GM12878 (cell line): ENCODE measurements at regions of chr11 and their contacts with region 1.

Region 1: DNA sequence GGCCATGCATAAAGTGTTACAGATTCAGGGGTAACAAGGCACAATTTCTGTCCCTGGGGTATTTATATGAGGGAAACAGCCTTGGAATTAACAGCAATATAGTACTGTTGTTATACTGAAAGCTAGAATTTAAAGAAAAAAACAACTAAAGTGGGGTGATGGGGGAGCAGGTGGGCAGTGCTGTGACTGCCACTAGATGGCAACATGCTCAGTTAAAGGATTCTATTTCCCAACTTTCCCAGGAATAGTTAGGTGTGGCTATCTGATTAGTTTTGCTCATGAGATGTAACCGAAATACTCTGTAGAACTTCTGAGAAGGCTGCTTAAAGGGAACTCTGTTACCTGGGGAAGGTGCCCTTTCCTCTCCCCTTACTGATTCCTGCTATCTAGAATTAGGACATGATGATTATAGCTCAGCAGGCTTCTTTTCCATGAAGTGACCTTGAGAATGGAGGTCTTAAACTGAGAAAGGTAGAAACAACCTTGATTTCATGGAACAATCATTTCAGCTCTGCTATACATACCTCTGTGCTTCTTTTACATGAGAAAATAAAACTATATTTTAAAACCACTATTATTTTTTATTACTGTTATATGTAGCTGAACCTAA is 102.6 kb downstream of the RELT start:
- DNase-seq: no peak
- ATAC-seq: peak; percentile 68
- H3K4me3 ChIP-seq: no peak overlapping the region
- H3K27ac ChIP-seq: no peak overlapping the region
- H3K4me1 ChIP-seq: no peaks in the 10 kb centered on the region
- H3K27me3 ChIP-seq: no peaks in the 10 kb centered on the region
- CTCF ChIP-seq: peak; percentile 52 to 76 (median 67)
- EP300 ChIP-seq: no peak
- POLR2A ChIP-seq: no peak
- RAD21 ChIP-seq: 0 out of 2 replicates have a peak, but pooled peaks have one; percentile 18

Region 2: GRCh38 chr11:73288873-73289707 is 189.8 kb before region 1 on chr11:
- CTCF ChIA-PET with region 1: no interaction called
- POLR2A ChIA-PET with region 1: no interaction called
- RAD21 ChIA-PET with region 1: no interaction called
- SMC1A ChIA-PET with region 1: no interaction called
- in situ Hi-C with region 1: no loop called
- intact Hi-C with region 1: no loop called
- DNase-seq: peak; percentile 70
- ATAC-seq: peak; percentile 95
- H3K4me3 ChIP-seq: 0 out of 2 replicates have a peak overlapping the region, but pooled peaks have one; percentile 9
- H3K27ac ChIP-seq: peak overlapping the region; percentile 49
- H3K4me1 ChIP-seq: peaks cover 23% of the 10 kb centered on the region
- H3K27me3 ChIP-seq: no peaks in the 10 kb centered on the region; a peak in 2 of 4 replicates
- CTCF ChIP-seq: peak; percentile 92 to 99 (median 97)
- EP300 ChIP-seq: 0 out of 4 replicates have a peak, but pooled peaks of 1 of the 2 experiments have one; percentile 6
- POLR2A ChIP-seq: no peak
- RAD21 ChIP-seq: peak; percentile 94

Region 3: DNA sequence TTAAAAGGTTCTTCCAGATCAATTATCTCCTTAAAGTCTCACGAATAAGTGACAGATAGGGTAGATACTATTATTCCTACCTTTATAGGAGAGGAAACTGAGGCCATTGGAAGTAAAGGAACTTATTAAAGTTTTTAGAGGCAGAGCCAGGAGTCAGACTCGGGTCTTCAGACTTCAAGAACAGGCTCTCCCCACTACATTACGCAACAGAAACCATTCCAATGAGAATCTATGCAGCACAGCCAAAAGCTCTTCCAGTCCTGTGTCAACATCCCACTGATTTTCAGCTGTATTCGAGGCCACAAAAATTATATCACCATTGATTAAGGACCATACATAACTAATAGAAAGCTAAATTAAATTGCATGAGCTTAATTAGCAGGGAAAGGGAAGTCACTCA is 25.3 kb before region 1 on chr11:
- CTCF ChIA-PET with region 1: interaction called, 20 read pairs
- POLR2A ChIA-PET with region 1: no interaction called
- RAD21 ChIA-PET with region 1: interaction called, 3 read pairs
- SMC1A ChIA-PET with region 1: interaction called, 6 read pairs
- in situ Hi-C with region 1: no loop called
- intact Hi-C with region 1: no loop called
- DNase-seq: no peak
- ATAC-seq: no peak
- H3K4me3 ChIP-seq: no peak overlapping the region
- H3K27ac ChIP-seq: no peak overlapping the region
- H3K4me1 ChIP-seq: no peaks in the 10 kb centered on the region
- H3K27me3 ChIP-seq: no peaks in the 10 kb centered on the region
- CTCF ChIP-seq: no peak
- EP300 ChIP-seq: no peak
- POLR2A ChIP-seq: no peak
- RAD21 ChIP-seq: no peak

Region 4: DNA sequence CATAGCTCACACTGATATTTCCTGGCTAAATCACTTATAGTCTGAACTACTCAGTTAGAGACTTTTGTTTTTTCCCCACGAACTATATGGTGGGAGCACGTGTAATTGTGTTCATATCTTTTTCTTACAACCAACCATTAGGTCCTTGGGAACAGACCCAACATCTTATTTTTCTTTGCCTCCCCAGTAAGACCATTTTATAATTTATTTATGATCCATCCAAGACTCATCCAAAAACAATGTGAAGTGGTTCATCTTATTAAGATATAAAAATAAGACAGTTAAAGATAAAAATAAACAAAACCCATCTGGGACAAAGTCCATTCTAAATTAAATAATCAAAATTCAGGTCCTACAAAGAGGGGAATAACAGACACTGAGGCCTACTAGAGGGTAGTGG is 28.2 kb after region 1 on chr11:
- CTCF ChIA-PET with region 1: interaction called, 12 read pairs
- POLR2A ChIA-PET with region 1: no interaction called
- RAD21 ChIA-PET with region 1: no interaction called
- SMC1A ChIA-PET with region 1: interaction called, 19 read pairs
- in situ Hi-C with region 1: no loop called
- intact Hi-C with region 1: no loop called
- DNase-seq: no peak
- ATAC-seq: no peak
- H3K4me3 ChIP-seq: no peak overlapping the region
- H3K27ac ChIP-seq: no peak overlapping the region
- H3K4me1 ChIP-seq: no peaks in the 10 kb centered on the region
- H3K27me3 ChIP-seq: no peaks in the 10 kb centered on the region
- CTCF ChIP-seq: no peak
- EP300 ChIP-seq: no peak
- POLR2A ChIP-seq: no peak
- RAD21 ChIP-seq: no peak

Region 5: DNA sequence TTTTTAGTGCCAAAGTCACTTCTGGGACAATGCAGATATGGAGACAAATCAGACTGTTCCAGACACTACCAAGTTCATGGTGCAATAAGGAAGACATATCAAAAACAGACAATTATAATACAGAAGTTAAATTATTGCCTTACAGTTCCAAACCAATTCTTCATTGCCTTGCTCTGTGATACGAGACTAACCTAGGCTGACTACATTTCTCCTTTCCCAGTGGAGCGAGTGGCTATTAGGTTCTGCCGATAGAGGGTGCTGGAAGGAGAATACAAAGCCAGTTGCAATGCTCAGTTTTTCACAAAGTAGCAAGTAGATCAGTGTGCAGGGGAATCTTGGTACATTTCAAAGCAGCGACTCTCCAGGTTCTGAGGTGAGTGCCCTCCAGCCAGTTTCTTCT is 51.3 kb after region 1 on chr11:
- CTCF ChIA-PET with region 1: interaction called, 10 read pairs
- POLR2A ChIA-PET with region 1: interaction called, 3 read pairs
- RAD21 ChIA-PET with region 1: interaction called, 4 read pairs
- SMC1A ChIA-PET with region 1: interaction called, 9 read pairs
- in situ Hi-C with region 1: no loop called
- intact Hi-C with region 1: no loop called
- DNase-seq: no peak
- ATAC-seq: no peak
- H3K4me3 ChIP-seq: no peak overlapping the region
- H3K27ac ChIP-seq: no peak overlapping the region
- H3K4me1 ChIP-seq: peaks cover 11% of the 10 kb centered on the region
- H3K27me3 ChIP-seq: no peaks in the 10 kb centered on the region
- CTCF ChIP-seq: peak in 1 of 3 experiments; percentile 27; a peak in 1 of 6 replicates
- EP300 ChIP-seq: no peak
- POLR2A ChIP-seq: no peak
- RAD21 ChIP-seq: no peak

Region 6: GRCh38 chr11:73614591-73615244 is 135.9 kb after region 1 on chr11:
- CTCF ChIA-PET with region 1: interaction called, 9 read pairs
- POLR2A ChIA-PET with region 1: no interaction called
- RAD21 ChIA-PET with region 1: interaction called, 3 read pairs
- SMC1A ChIA-PET with region 1: interaction called, 4 read pairs
- in situ Hi-C with region 1: no loop called
- intact Hi-C with region 1: loop called (anchors 5 kb)
- DNase-seq: no peak
- ATAC-seq: no peak
- H3K4me3 ChIP-seq: no peak overlapping the region
- H3K27ac ChIP-seq: no peak overlapping the region
- H3K4me1 ChIP-seq: no peaks in the 10 kb centered on the region
- H3K27me3 ChIP-seq: no peaks in the 10 kb centered on the region
- CTCF ChIP-seq: no peak
- EP300 ChIP-seq: no peak
- POLR2A ChIP-seq: no peak
- RAD21 ChIP-seq: no peak

Region 7: GRCh38 chr11:74055938-74056337 is 577.1 kb after region 1 on chr11:
- CTCF ChIA-PET with region 1: no interaction called
- POLR2A ChIA-PET with region 1: no interaction called
- RAD21 ChIA-PET with region 1: no interaction called
- SMC1A ChIA-PET with region 1: no interaction called
- in situ Hi-C with region 1: no loop called
- intact Hi-C with region 1: no loop called
- DNase-seq: no peak
- ATAC-seq: no peak
- H3K4me3 ChIP-seq: no peak overlapping the region
- H3K27ac ChIP-seq: no peak overlapping the region
- H3K4me1 ChIP-seq: no peaks in the 10 kb centered on the region
- H3K27me3 ChIP-seq: no peaks in the 10 kb centered on the region
- CTCF ChIP-seq: no peak
- EP300 ChIP-seq: no peak
- POLR2A ChIP-seq: no peak
- RAD21 ChIP-seq: no peak